ENCODE measurements at regions of chr4 and their contacts with region 1.

Region 1: DNA sequence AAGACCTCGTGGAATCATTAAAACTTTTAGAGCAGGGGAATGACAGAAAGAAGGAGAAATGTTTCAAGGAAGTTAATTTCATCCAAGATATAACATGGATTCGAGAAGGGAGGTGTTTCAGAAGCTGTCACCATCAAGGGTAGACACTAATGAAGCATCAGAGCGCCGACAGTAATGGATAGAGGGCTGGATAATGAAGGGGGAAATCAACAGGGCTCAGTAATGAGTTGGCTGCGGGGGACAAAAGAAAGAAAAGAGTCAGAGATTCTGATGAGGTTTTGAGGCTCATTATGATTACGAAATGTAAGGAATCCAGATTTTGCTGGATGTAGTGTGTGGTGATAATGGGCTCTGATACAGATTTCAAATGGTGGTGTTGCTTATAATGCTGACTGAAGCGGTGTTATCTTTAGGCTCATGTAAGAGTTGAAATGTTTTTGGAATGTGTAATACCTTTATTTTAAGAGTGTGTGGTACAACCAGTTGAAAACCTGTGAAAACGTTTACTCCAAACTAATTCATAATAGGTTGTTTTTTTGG is 39.3 kb upstream of the TENM3 start:
- DNase-seq: no peak
- H3K4me3 ChIP-seq: no peak overlapping the region
- H3K27ac ChIP-seq: no peak overlapping the region
- H3K4me1 ChIP-seq: peaks cover 0 to 4% (median 0%) of the 10 kb centered on the region in 4 donors
- H3K27me3 ChIP-seq: no peaks in the 10 kb centered on the region
- CTCF ChIP-seq: no peak
- EP300 ChIP-seq: no peak
- POLR2A ChIP-seq: no peak

Region 2: DNA sequence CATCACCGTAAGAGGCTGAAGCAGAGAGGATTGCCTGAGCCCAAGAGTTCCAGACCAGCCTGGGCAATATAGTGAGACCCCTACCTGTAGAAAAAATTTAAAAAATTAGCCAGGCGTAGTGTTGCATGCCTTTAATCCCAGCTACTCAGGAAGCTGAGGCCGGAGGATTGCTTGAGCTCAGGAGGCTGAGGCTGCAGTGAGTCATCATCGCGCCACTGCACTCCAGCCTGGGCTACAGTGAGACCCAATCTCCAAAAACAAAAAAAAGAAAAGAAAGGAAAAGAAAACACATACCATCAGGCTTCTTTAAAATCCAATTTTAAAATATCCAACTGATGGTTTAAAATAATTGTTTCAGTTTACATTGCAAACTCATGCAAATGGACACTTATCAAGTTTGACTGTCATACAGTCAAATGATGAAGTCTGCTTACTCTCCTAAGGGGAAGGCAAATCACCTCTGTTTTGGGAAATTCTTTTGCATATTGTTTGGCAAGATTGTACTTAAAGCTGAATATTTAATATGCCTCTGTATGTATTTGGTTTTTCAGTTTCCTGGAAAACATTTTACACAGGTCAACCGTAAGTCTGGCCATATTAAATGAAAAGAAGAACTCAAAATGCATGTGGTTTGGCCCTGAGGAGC is 15.6 kb after region 1 on chr4:
- in situ Hi-C with region 1: no loop called
- intact Hi-C with region 1: no loop called
- DNase-seq: no peak
- H3K4me3 ChIP-seq: no peak overlapping the region
- H3K27ac ChIP-seq: no peak overlapping the region
- H3K4me1 ChIP-seq: no peaks in the 10 kb centered on the region
- H3K27me3 ChIP-seq: no peaks in the 10 kb centered on the region
- CTCF ChIP-seq: no peak
- EP300 ChIP-seq: no peak
- POLR2A ChIP-seq: no peak

Region 3: DNA sequence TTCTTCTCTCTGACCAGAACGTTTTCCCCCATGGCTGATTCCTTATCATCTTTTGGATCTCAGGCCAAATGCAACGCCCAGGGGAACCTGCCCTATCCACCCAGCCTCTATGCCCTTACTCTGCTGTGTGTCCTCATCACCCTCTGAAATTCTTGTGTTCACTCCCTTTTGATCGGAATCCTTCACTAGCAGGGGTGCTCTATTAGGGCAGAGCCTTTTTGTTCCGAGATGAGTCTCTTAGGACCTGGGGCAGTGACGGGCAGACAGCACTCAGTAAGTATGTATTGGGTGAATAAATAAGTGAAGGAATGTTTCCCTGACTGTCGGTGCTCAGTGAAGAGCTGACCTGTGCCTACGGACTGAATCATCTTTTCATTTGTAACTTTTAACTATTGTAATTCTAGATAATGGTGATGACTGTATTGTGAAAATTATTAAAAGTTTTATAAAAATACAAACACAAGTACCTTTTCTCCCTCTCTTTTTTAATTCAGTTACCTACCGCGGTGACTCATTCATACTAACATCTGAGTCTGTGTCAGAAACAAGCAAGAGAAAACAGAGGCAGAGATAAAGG is 34.5 kb after region 1 on chr4:
- in situ Hi-C with region 1: no loop called
- intact Hi-C with region 1: loop called (anchors 1 kb)
- DNase-seq: no peak
- H3K4me3 ChIP-seq: no peak overlapping the region
- H3K27ac ChIP-seq: no peak overlapping the region
- H3K4me1 ChIP-seq: no peaks in the 10 kb centered on the region
- H3K27me3 ChIP-seq: no peaks in the 10 kb centered on the region
- CTCF ChIP-seq: no peak
- EP300 ChIP-seq: no peak
- POLR2A ChIP-seq: no peak

Measured in transverse colon (tissue), 4 donors.